ENCODE measurements at regions of chr2 and their contacts with region 1.

Region 1: GRCh38 chr2:236679884-236680860 is 110.5 kb downstream of the ACKR3 start:
- DNase-seq: peak; percentile 40
- ATAC-seq: peak; percentile 88
- H3K4me3 ChIP-seq: no peak overlapping the region
- H3K27ac ChIP-seq: peak overlapping the region; percentile 61; the same call in 1 of the 2 replicates
- H3K4me1 ChIP-seq: peaks cover 4% of the 10 kb centered on the region
- H3K27me3 ChIP-seq: peaks cover 17% of the 10 kb centered on the region
- CTCF ChIP-seq: no peak
- POLR2A ChIP-seq: no peak
- RAD21 ChIP-seq: no peak

Region 2: GRCh38 chr2:236663287-236664101 is 16.7 kb before region 1 on chr2:
- CTCF ChIA-PET with region 1: no interaction called
- POLR2A ChIA-PET with region 1: no interaction called
- dilution Hi-C with region 1: no loop called
- in situ Hi-C with region 1: no loop called
- intact Hi-C with region 1: loop called (anchors 1 kb)
- DNase-seq: peak; percentile 41
- ATAC-seq: peak; percentile 69
- H3K4me3 ChIP-seq: no peak overlapping the region
- H3K27ac ChIP-seq: no peak overlapping the region
- H3K4me1 ChIP-seq: peaks cover 10% of the 10 kb centered on the region; the same call in 1 of the 2 replicates
- H3K27me3 ChIP-seq: peaks cover 2% of the 10 kb centered on the region
- CTCF ChIP-seq: no peak
- POLR2A ChIP-seq: no peak
- RAD21 ChIP-seq: no peak

Region 3: GRCh38 chr2:236718207-236718992 is 38.2 kb after region 1 on chr2:
- CTCF ChIA-PET with region 1: no interaction called
- POLR2A ChIA-PET with region 1: no interaction called
- dilution Hi-C with region 1: no loop called
- in situ Hi-C with region 1: no loop called
- intact Hi-C with region 1: no loop called
- DNase-seq: peak; percentile 8
- ATAC-seq: no peak
- H3K4me3 ChIP-seq: no peak overlapping the region
- H3K27ac ChIP-seq: no peak overlapping the region
- H3K4me1 ChIP-seq: no peaks in the 10 kb centered on the region
- H3K27me3 ChIP-seq: peaks cover 14% of the 10 kb centered on the region
- CTCF ChIP-seq: no peak
- POLR2A ChIP-seq: no peak
- RAD21 ChIP-seq: no peak

Measured in IMR-90 (cell line).